PC-9 (cell line): ENCODE measurements at regions of chr14 and their contacts with region 1.

Region 1: GRCh38 chr14:22556990-22557623 is 31.9 kb downstream of the DAD1 start:
- DNase-seq: peak; percentile 44 to 74
- H3K4me3 ChIP-seq: peak overlapping the region; percentile 55; the same call in 1 of the 2 replicates
- H3K27ac ChIP-seq: peak overlapping the region; percentile 87
- H3K4me1 ChIP-seq: peaks cover 38% of the 10 kb centered on the region
- H3K27me3 ChIP-seq: no peaks in the 10 kb centered on the region
- CTCF ChIP-seq: peak; percentile 98

Region 2: GRCh38 chr14:22221508-22221907 is 335.6 kb before region 1 on chr14:
- CTCF ChIA-PET with region 1: no interaction called
- POLR2A ChIA-PET with region 1: no interaction called
- intact Hi-C with region 1: loop called (anchors 5 kb)
- DNase-seq: no peak
- H3K4me3 ChIP-seq: no peak overlapping the region
- H3K27ac ChIP-seq: no peak overlapping the region
- H3K4me1 ChIP-seq: peaks cover 18% of the 10 kb centered on the region
- H3K27me3 ChIP-seq: no peaks in the 10 kb centered on the region
- CTCF ChIP-seq: peak; percentile 48; the same call in 1 of the 2 replicates

Region 3: GRCh38 chr14:22319526-22320361 is 237.4 kb before region 1 on chr14:
- CTCF ChIA-PET with region 1: no interaction called
- POLR2A ChIA-PET with region 1: no interaction called
- intact Hi-C with region 1: loop called (anchors 5 kb)
- DNase-seq: peak; percentile 40 to 48
- H3K4me3 ChIP-seq: no peak overlapping the region
- H3K27ac ChIP-seq: no peak overlapping the region
- H3K4me1 ChIP-seq: no peaks in the 10 kb centered on the region
- H3K27me3 ChIP-seq: no peaks in the 10 kb centered on the region
- CTCF ChIP-seq: peak; percentile 76

Region 4: GRCh38 chr14:22386924-22387775 is 170.0 kb before region 1 on chr14:
- CTCF ChIA-PET with region 1: interaction called, 11 read pairs
- POLR2A ChIA-PET with region 1: no interaction called
- intact Hi-C with region 1: loop called (anchors 1 kb)
- DNase-seq: peak in 1 of 2 experiments; percentile 37
- H3K4me3 ChIP-seq: no peak overlapping the region
- H3K27ac ChIP-seq: no peak overlapping the region
- H3K4me1 ChIP-seq: peaks cover 47% of the 10 kb centered on the region
- H3K27me3 ChIP-seq: no peaks in the 10 kb centered on the region
- CTCF ChIP-seq: peak; percentile 81

Region 5: GRCh38 chr14:22491683-22492621 is 65.2 kb before region 1 on chr14:
- CTCF ChIA-PET with region 1: no interaction called
- POLR2A ChIA-PET with region 1: no interaction called
- intact Hi-C with region 1: no loop called
- DNase-seq: no peak
- H3K4me3 ChIP-seq: no peak overlapping the region
- H3K27ac ChIP-seq: no peak overlapping the region
- H3K4me1 ChIP-seq: no peaks in the 10 kb centered on the region
- H3K27me3 ChIP-seq: no peaks in the 10 kb centered on the region
- CTCF ChIP-seq: no peak

Region 6: GRCh38 chr14:22715186-22715812 is 158.2 kb after region 1 on chr14:
- CTCF ChIA-PET with region 1: interaction called, 16 read pairs
- POLR2A ChIA-PET with region 1: no interaction called
- intact Hi-C with region 1: no loop called
- DNase-seq: no peak
- H3K4me3 ChIP-seq: no peak overlapping the region
- H3K27ac ChIP-seq: no peak overlapping the region
- H3K4me1 ChIP-seq: no peaks in the 10 kb centered on the region
- H3K27me3 ChIP-seq: no peaks in the 10 kb centered on the region
- CTCF ChIP-seq: no peak

Region 7: GRCh38 chr14:22852940-22853767 is 296.0 kb after region 1 on chr14:
- CTCF ChIA-PET with region 1: no interaction called
- POLR2A ChIA-PET with region 1: no interaction called
- intact Hi-C with region 1: loop called (anchors 5 kb)
- DNase-seq: peak in 1 of 2 experiments; percentile 80
- H3K4me3 ChIP-seq: peak overlapping the region; percentile 48; the same call in 1 of the 2 replicates
- H3K27ac ChIP-seq: no peak overlapping the region
- H3K4me1 ChIP-seq: peaks cover 4% of the 10 kb centered on the region; the same call in 1 of the 2 replicates
- H3K27me3 ChIP-seq: no peaks in the 10 kb centered on the region
- CTCF ChIP-seq: peak; percentile 91

Region 8: GRCh38 chr14:22986508-22987054 is 429.5 kb after region 1 on chr14:
- CTCF ChIA-PET with region 1: no interaction called
- POLR2A ChIA-PET with region 1: no interaction called
- intact Hi-C with region 1: loop called (anchors 2 kb)
- DNase-seq: peak; percentile 60 to 70
- H3K4me3 ChIP-seq: no peak overlapping the region
- H3K27ac ChIP-seq: no peak overlapping the region
- H3K4me1 ChIP-seq: 0 out of 2 replicates have a peak, but pooled peaks cover 4% of the 10 kb centered on the region
- H3K27me3 ChIP-seq: no peaks in the 10 kb centered on the region
- CTCF ChIP-seq: peak; percentile 82